Gastrocnemius medialis (tissue), 4 donors: ENCODE measurements at regions of chr17 and their contacts with region 1.

Region 1: DNA sequence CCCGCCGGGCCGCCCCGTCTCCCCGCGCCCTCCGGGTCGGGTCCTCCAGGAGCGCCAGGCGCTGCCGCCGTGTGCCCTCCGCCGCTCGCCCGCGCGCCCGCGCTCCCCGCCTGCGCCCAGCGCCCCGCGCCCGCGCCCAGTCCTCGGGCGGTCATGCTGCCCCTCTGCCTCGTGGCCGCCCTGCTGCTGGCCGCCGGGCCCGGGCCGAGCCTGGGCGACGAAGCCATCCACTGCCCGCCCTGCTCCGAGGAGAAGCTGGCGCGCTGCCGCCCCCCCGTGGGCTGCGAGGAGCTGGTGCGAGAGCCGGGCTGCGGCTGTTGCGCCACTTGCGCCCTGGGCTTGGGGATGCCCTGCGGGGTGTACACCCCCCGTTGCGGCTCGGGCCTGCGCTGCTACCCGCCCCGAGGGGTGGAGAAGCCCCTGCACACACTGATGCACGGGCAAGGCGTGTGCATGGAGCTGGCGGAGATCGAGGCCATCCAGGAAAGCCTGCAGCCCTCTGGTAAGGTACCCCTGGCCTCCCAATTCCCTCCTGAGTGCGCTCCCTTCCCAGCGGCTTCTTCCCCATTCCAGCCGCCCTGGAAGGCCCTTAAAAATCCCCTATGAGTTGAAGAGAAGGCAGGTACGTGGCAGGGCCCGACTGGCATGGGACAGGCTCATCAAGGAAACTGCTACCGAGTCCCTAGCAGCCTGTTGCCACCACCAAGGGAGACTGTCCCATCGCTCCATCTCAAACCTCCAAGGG is 505 bp downstream of the IGFBP4 start:
- DNase-seq: peak; percentile 56 to 67
- ATAC-seq: peak; percentile 57 to 75
- H3K4me3 ChIP-seq: peak overlapping the region; percentile 53 to 64 (median 57)
- H3K27ac ChIP-seq: peak overlapping the region; percentile 73 to 82 (median 78)
- H3K4me1 ChIP-seq: peaks cover 10 to 17% of the 10 kb centered on the region in 2 donors
- H3K27me3 ChIP-seq: peaks cover 0 to 2% (median 0%) of the 10 kb centered on the region in 3 donors
- CTCF ChIP-seq: peak in 4 of 5 experiments; percentile 42 to 46 (median 45)
- POLR2A ChIP-seq: no peak

Region 2: GRCh38 chr17:40247926-40248495 is 195.7 kb before region 1 on chr17:
- in situ Hi-C with region 1: no loop called
- intact Hi-C with region 1: no loop called
- DNase-seq: no peak
- ATAC-seq: no peak
- H3K4me3 ChIP-seq: no peak overlapping the region
- H3K27ac ChIP-seq: no peak overlapping the region
- H3K4me1 ChIP-seq: peaks cover 17 to 21% of the 10 kb centered on the region in 2 donors
- H3K27me3 ChIP-seq: no peaks in the 10 kb centered on the region
- CTCF ChIP-seq: no peak
- POLR2A ChIP-seq: no peak

Region 3: DNA sequence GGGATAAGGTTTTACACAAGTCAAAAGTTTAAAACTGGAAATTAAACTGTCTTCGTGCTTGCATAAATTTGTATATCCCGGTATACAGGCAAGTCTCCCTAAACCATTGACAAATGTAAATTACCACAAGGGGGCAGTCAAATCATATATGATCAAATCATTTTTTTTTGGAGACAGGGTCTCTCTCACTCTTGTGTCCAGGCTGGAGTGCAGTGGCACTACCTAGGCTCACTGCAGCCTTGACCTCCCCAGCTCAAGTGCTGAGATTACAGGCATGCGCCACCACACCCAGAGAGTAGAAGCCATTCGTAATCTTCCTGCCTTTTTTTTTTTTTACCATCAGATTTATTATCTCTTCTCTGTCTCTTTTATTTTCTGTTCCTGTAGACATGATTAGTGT is 44.6 kb before region 1 on chr17:
- in situ Hi-C with region 1: no loop called
- intact Hi-C with region 1: loop called (anchors 5 kb)
- DNase-seq: no peak
- ATAC-seq: peak in 1 of 2 donors; percentile 74
- H3K4me3 ChIP-seq: no peak overlapping the region
- H3K27ac ChIP-seq: no peak overlapping the region
- H3K4me1 ChIP-seq: no peaks in the 10 kb centered on the region
- H3K27me3 ChIP-seq: no peaks in the 10 kb centered on the region
- CTCF ChIP-seq: peak; percentile 47 to 71 (median 56)
- POLR2A ChIP-seq: no peak

Region 4: GRCh38 chr17:40479533-40480480 is 36.1 kb after region 1 on chr17:
- in situ Hi-C with region 1: no loop called
- intact Hi-C with region 1: loop called (anchors 2 kb)
- DNase-seq: no peak
- ATAC-seq: no peak
- H3K4me3 ChIP-seq: no peak overlapping the region
- H3K27ac ChIP-seq: no peak overlapping the region
- H3K4me1 ChIP-seq: peaks cover 0 to 10% of the 10 kb centered on the region in 2 donors
- H3K27me3 ChIP-seq: no peaks in the 10 kb centered on the region
- CTCF ChIP-seq: no peak
- POLR2A ChIP-seq: no peak

Region 5: GRCh38 chr17:40499551-40500174 is 55.9 kb after region 1 on chr17:
- in situ Hi-C with region 1: no loop called
- intact Hi-C with region 1: no loop called
- DNase-seq: peak; percentile 81 to 93
- ATAC-seq: peak; percentile 94 to 95
- H3K4me3 ChIP-seq: peak overlapping the region; percentile 11 to 20 (median 18)
- H3K27ac ChIP-seq: peak overlapping the region; percentile 55 to 76 (median 63)
- H3K4me1 ChIP-seq: peaks cover 16 to 18% of the 10 kb centered on the region in 2 donors
- H3K27me3 ChIP-seq: no peaks in the 10 kb centered on the region
- CTCF ChIP-seq: peak in 2 of 5 experiments; percentile 10 to 19
- POLR2A ChIP-seq: no peak

Region 6: DNA sequence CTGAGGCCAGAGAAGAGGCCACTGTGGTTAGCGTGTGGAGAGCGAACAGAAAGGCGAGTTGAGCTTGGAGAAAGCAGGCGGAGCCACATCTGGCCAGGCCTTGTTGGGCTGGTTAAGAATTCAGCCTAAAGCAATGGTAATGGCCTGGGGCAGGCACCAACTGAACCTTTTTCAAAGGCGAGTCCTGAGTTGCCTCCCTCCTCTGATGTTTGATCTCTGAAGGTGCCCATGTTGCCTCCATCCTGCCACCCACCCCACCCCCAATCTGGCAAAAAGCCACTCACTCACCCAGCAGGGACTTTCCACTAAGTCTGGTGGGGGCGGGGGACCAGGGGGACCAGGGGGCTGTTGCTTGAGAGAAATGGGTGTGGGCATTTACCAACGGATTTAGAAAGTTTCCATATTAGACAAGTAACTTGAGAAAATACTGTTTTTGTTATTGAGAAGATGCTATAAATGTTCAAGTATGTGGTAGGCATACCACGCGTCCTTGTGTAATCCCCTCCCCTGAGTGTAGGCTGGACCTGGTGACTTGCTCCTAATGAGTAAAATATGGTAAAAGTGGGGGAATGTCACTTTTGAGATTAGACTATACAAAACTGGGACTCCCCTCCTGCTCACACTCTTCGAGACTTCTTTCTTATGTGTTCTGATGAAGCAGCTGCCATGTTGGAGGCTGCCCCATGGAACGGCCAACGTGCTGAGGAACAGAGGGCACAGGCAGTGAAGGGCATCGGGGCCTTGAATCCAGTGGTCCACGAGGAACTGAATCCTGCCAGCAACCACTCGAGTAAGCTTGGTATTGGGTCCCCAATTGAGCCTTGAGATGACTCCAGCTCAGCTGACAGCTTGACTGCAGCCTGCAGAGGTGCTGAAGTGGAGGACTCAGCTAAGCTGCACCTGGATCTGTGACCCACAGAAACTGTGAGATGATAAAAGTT is 87.6 kb after region 1 on chr17:
- in situ Hi-C with region 1: loop called (anchors 5 to 25 kb)
- intact Hi-C with region 1: loop called (anchors 1 kb)
- DNase-seq: peak in 1 of 2 donors; percentile 11
- ATAC-seq: no peak
- H3K4me3 ChIP-seq: no peak overlapping the region
- H3K27ac ChIP-seq: peak overlapping the region in 1 of 4 donors; percentile 46
- H3K4me1 ChIP-seq: peaks cover 15 to 17% of the 10 kb centered on the region in 2 donors
- H3K27me3 ChIP-seq: no peaks in the 10 kb centered on the region
- CTCF ChIP-seq: no peak
- POLR2A ChIP-seq: no peak

Region 7: GRCh38 chr17:40536295-40537171 is 92.8 kb after region 1 on chr17:
- in situ Hi-C with region 1: loop called (anchors 5 to 25 kb)
- intact Hi-C with region 1: loop called (anchors 1 kb)
- DNase-seq: peak in 1 of 2 donors; percentile 55
- ATAC-seq: peak; percentile 23 to 34
- H3K4me3 ChIP-seq: no peak overlapping the region
- H3K27ac ChIP-seq: peak overlapping the region; percentile 49 to 80 (median 69)
- H3K4me1 ChIP-seq: peaks cover 47 to 50% of the 10 kb centered on the region in 2 donors
- H3K27me3 ChIP-seq: no peaks in the 10 kb centered on the region
- CTCF ChIP-seq: no peak
- POLR2A ChIP-seq: no peak

Region 8: DNA sequence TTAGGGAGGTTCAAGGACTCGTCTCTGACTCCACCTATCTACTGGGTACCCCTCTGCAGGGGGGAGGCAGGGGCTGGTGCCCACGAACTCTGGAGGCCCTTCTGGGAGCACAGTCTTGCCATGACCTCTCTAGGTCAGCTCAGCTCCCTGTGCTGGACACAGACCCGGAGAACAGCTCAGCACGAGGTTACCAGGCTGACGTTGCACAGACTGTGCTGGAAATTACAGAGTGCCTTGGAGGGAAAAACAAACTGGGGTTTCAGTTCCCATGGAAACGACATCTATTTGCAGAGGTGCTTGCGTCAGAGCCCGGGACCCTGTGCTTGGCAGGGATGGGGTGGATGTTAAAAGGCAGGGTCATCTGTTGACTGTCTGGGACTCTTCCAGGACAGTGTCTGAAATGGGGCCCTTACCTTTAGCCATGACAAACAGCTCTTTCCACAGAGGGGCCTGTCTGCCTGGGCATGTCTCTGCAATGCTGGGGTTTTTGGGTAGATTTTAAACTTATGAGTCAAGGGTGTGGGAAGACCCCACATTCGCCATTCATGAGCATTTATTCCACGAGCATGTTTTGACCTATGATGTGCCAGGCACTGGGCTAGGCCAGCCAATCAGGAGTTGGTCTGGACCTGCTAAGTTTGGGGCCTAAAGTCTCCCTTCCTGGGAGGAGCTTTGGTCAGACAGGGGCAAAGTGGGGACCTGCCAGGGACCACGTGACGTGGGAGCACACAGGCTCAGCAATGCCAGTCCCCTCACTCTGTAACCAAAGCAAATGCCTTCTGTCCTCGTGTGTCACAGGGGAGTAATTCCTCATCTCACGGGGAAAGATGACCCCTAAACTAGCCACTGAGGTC is 99.0 kb after region 1 on chr17:
- in situ Hi-C with region 1: loop called in 2 of 4 experiments (anchors 10 to 25 kb)
- intact Hi-C with region 1: no loop called
- DNase-seq: peak; percentile 59 to 71
- ATAC-seq: peak; percentile 77 to 78
- H3K4me3 ChIP-seq: no peak overlapping the region
- H3K27ac ChIP-seq: peak overlapping the region; percentile 74 to 80 (median 80)
- H3K4me1 ChIP-seq: peaks cover 45 to 60% of the 10 kb centered on the region in 2 donors
- H3K27me3 ChIP-seq: no peaks in the 10 kb centered on the region
- CTCF ChIP-seq: no peak
- POLR2A ChIP-seq: no peak

Region 9: GRCh38 chr17:40559954-40560591 is 116.3 kb after region 1 on chr17:
- in situ Hi-C with region 1: no loop called
- intact Hi-C with region 1: loop called (anchors 1 kb)
- DNase-seq: peak; percentile 61 to 81
- ATAC-seq: peak; percentile 89 to 92
- H3K4me3 ChIP-seq: no peak overlapping the region
- H3K27ac ChIP-seq: peak overlapping the region; percentile 41 to 73 (median 65)
- H3K4me1 ChIP-seq: peaks cover 6 to 7% of the 10 kb centered on the region in 2 donors
- H3K27me3 ChIP-seq: no peaks in the 10 kb centered on the region
- CTCF ChIP-seq: peak; percentile 95 to 98 (median 96)
- POLR2A ChIP-seq: no peak